Esophagus muscularis mucosa (tissue), 4 donors: ENCODE measurements at regions of chr14 and their contacts with region 1.

Region 1: GRCh38 chr14:26394150-26394810 is 203.6 kb downstream of the NOVA1 start:
- DNase-seq: no peak
- H3K4me3 ChIP-seq: no peak overlapping the region
- H3K27ac ChIP-seq: no peak overlapping the region
- H3K4me1 ChIP-seq: peaks cover 0 to 28% (median 26%) of the 10 kb centered on the region in 4 donors
- H3K27me3 ChIP-seq: no peaks in the 10 kb centered on the region
- CTCF ChIP-seq: peak; percentile 38 to 60 (median 45)
- EP300 ChIP-seq: no peak
- POLR2A ChIP-seq: no peak

Region 2: DNA sequence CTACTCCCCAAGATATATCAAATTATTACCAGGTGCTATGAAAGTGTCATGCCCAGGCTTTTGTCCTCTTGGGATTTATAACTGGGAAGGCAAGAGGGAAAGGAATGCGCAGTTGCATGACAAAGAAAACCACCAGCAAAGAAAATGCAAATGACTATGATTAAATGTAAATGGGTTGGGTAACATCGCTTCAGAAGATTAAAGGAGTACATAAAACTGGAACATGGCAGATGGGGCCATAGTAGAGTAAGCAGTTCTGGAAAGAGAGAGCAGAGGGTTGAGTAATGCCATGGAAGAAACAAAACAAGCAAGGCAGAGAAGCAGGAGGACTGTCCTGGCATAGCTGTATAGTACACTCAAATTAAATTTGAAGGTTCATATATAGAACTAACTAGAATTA is 289.6 kb before region 1 on chr14:
- intact Hi-C with region 1: no loop called
- DNase-seq: no peak
- H3K4me3 ChIP-seq: no peak overlapping the region
- H3K27ac ChIP-seq: no peak overlapping the region
- H3K4me1 ChIP-seq: peaks cover 0 to 5% (median 0%) of the 10 kb centered on the region in 4 donors
- H3K27me3 ChIP-seq: no peaks in the 10 kb centered on the region
- CTCF ChIP-seq: no peak
- EP300 ChIP-seq: no peak
- POLR2A ChIP-seq: no peak

Region 3: DNA sequence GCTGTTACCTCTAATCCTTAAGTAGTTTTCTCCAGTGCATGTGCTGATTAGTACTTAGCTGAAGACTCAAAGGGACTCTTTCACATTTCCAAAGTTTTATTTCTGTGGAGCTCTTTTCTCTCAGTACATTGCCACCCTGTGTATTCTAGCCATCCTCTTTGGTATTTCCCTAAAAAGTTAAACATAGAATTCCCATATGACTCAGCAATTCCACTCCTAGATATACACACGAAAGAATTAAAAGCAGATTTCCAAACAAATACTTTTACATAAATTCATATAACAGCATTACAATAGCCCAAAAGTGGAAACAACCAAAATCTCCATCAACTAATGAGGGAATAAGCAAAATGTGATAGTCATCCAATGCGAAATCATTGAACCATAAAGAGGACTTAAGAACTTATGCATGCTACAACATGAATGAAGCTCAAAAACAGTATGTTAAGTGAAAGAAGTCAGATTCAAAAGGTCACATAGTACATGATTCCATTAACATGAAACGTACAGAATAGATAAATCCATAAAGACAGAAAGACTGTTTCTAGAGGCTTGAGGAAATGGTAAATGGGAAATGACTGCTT is 212.5 kb after region 1 on chr14:
- intact Hi-C with region 1: loop called (anchors 10 kb)
- DNase-seq: no peak
- H3K4me3 ChIP-seq: no peak overlapping the region
- H3K27ac ChIP-seq: no peak overlapping the region
- H3K4me1 ChIP-seq: no peaks in the 10 kb centered on the region
- H3K27me3 ChIP-seq: no peaks in the 10 kb centered on the region
- CTCF ChIP-seq: no peak
- EP300 ChIP-seq: no peak
- POLR2A ChIP-seq: no peak

Region 4: GRCh38 chr14:26730929-26731618 is 336.8 kb after region 1 on chr14:
- intact Hi-C with region 1: loop called (anchors 2 kb)
- DNase-seq: no peak
- H3K4me3 ChIP-seq: no peak overlapping the region
- H3K27ac ChIP-seq: no peak overlapping the region
- H3K4me1 ChIP-seq: no peaks in the 10 kb centered on the region
- H3K27me3 ChIP-seq: no peaks in the 10 kb centered on the region
- CTCF ChIP-seq: peak; percentile 23 to 50 (median 43)
- EP300 ChIP-seq: no peak
- POLR2A ChIP-seq: no peak

Region 5: DNA sequence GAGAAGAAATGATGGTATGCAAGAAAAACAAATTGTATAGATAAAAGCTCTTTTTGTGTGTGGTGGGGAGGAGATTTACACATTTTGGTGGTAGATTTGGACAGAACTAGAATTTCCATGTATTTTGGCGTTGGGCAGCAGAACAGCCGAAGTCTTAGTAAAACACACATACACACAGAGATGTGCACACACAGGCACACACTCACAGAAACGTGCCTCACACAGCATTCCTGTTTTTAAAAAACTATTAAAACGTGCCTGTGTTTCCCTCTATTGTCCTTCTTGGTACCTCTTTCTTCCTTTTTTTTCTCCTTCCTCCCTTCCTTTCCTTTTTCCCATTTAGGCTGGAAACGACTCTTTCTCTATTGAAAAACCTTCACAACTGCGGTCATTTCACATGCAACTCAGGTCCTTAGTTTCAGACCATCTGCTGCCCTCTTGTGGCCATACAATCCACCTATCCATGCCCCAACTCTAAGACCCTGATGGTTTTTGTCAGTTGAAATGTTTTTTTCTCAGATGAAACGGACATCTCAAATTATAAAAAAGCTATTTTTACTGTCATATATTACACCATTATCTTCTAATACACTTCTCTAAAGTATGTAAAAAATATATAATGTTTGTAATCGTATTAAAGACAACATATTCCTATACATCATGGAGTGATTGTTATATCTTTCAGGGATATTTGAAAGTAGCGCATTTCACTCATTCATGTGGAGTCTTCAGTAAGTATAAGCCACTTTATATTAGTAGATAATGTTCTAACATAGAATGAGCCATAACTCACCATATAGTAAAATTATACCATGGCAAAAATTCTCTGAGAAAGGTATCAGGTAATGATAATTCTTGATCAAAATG is 590.3 kb after region 1 on chr14:
- intact Hi-C with region 1: loop called (anchors 2 kb)
- DNase-seq: no peak
- H3K4me3 ChIP-seq: no peak overlapping the region
- H3K27ac ChIP-seq: no peak overlapping the region
- H3K4me1 ChIP-seq: no peaks in the 10 kb centered on the region
- H3K27me3 ChIP-seq: no peaks in the 10 kb centered on the region
- CTCF ChIP-seq: peak; percentile 55 to 74 (median 72)
- EP300 ChIP-seq: no peak
- POLR2A ChIP-seq: no peak

Region 6: GRCh38 chr14:28280997-28281598 is 1886.8 kb after region 1 on chr14:
- intact Hi-C with region 1: no loop called
- DNase-seq: no peak
- H3K4me3 ChIP-seq: no peak overlapping the region
- H3K27ac ChIP-seq: no peak overlapping the region
- H3K4me1 ChIP-seq: no peaks in the 10 kb centered on the region
- H3K27me3 ChIP-seq: no peaks in the 10 kb centered on the region
- CTCF ChIP-seq: no peak
- EP300 ChIP-seq: no peak
- POLR2A ChIP-seq: no peak